PC-9 (cell line): ENCODE measurements at regions of chr19 and their contacts with region 1.

Region 1: GRCh38 chr19:41263850-41264580 is at the start of gene HNRNPUL1:
- DNase-seq: peak; percentile 99 to 100
- H3K4me3 ChIP-seq: peak within 1 kb of the TSS; percentile 85
- H3K27ac ChIP-seq: peak within 1 kb of the TSS; percentile 90
- H3K4me1 ChIP-seq: peaks cover 10% of the 10 kb centered on the region; the same call in 1 of the 2 replicates
- H3K27me3 ChIP-seq: no peaks in the 10 kb centered on the region
- CTCF ChIP-seq: no peak
- total RNA-seq, gene HNRNPUL1: 248 and 266 TPM in 2 replicates

Region 2: DNA sequence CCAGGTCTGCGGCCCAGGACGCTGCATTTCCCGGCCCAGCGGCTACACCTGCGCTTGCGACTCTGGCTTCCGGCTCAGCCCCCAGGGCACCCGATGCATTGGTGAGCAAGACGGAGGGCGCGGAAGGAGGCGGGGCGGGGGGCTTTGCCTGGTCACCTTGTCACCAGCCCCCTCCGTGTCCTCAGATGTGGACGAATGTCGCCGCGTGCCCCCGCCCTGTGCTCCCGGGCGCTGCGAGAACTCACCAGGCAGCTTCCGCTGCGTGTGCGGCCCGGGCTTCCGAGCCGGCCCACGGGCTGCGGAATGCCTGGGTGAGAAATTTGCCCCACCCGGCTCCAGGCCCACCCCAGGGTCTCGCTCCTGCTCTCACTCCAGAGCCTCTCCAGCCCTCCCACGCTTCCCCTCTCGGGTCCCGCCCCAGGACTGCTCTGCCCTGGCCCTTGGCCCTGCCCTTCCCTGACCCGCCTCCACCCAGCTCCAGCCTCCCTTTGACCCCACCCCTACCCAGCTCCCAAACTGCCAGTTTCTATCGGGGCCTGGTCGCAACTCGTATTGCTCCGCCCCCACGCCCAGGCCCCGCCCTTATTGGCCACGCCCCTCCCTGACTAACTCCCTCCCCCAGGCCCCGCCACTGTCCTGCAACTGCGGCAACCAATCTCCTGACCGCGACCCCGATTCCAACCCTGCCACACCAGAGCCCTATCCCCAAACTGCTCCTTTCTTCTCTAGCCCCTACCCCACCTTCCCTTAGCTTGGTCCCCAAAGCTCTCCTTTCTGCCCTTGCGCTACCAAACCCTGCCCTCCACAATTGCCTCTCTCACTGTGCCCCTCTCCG is 654.2 kb before region 1 on chr19:
- CTCF ChIA-PET with region 1: interaction called, 5 read pairs
- POLR2A ChIA-PET with region 1: interaction called, 11 read pairs
- intact Hi-C with region 1: no loop called
- DNase-seq: peak; percentile 77 to 95
- H3K4me3 ChIP-seq: peak overlapping the region; percentile 63
- H3K27ac ChIP-seq: no peak overlapping the region
- H3K4me1 ChIP-seq: peaks cover 18% of the 10 kb centered on the region
- H3K27me3 ChIP-seq: no peaks in the 10 kb centered on the region
- CTCF ChIP-seq: no peak

Region 3: GRCh38 chr19:40974633-40975037 is 289.4 kb before region 1 on chr19:
- CTCF ChIA-PET with region 1: no interaction called
- POLR2A ChIA-PET with region 1: no interaction called
- intact Hi-C with region 1: loop called (anchors 2 kb)
- DNase-seq: peak; percentile 42 to 63
- H3K4me3 ChIP-seq: no peak overlapping the region
- H3K27ac ChIP-seq: no peak overlapping the region
- H3K4me1 ChIP-seq: no peaks in the 10 kb centered on the region
- H3K27me3 ChIP-seq: peaks cover 7% of the 10 kb centered on the region; the same call in 1 of the 2 replicates
- CTCF ChIP-seq: peak; percentile 94

Region 4: DNA sequence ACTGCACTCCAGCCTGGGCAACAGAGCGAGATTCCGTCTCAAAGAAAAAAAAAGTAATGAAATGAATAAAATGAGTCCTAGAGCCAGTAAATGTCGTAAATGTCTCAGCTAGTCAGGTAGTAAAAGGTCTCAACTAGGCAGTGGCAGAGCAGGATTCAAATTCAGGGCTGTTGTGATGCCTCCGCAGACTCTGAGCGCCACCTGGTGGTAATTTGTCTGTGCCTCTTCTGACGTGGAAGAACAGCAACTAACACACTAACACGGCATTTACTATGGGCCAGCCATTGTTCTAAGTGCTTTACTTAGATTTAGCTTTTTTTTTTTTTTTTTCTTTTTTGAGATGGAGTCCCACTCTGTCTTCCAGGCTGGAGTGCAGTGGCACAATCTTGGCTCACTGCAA is 119.6 kb before region 1 on chr19:
- CTCF ChIA-PET with region 1: interaction called, 4 read pairs
- POLR2A ChIA-PET with region 1: no interaction called
- intact Hi-C with region 1: loop called (anchors 10 kb)
- DNase-seq: peak; percentile 64 to 75
- H3K4me3 ChIP-seq: no peak overlapping the region
- H3K27ac ChIP-seq: no peak overlapping the region
- H3K4me1 ChIP-seq: no peaks in the 10 kb centered on the region
- H3K27me3 ChIP-seq: no peaks in the 10 kb centered on the region
- CTCF ChIP-seq: peak; percentile 90

Region 5: GRCh38 chr19:41218615-41219507 is 45.2 kb before region 1 on chr19 and contains the start of gene AXL:
- CTCF ChIA-PET with region 1: no interaction called
- POLR2A ChIA-PET with region 1: interaction called, 10 read pairs
- intact Hi-C with region 1: loop called (anchors 1 kb)
- DNase-seq: peak in 1 of 2 experiments; percentile 87
- H3K4me3 ChIP-seq: peak within 1 kb of the TSS; percentile 68
- H3K27ac ChIP-seq: no peak within 1 kb of the TSS
- H3K4me1 ChIP-seq: peaks cover 25% of the 10 kb centered on the region
- H3K27me3 ChIP-seq: no peaks in the 10 kb centered on the region
- CTCF ChIP-seq: no peak
- total RNA-seq, gene AXL: 236 and 271 TPM in 2 replicates

Region 6: DNA sequence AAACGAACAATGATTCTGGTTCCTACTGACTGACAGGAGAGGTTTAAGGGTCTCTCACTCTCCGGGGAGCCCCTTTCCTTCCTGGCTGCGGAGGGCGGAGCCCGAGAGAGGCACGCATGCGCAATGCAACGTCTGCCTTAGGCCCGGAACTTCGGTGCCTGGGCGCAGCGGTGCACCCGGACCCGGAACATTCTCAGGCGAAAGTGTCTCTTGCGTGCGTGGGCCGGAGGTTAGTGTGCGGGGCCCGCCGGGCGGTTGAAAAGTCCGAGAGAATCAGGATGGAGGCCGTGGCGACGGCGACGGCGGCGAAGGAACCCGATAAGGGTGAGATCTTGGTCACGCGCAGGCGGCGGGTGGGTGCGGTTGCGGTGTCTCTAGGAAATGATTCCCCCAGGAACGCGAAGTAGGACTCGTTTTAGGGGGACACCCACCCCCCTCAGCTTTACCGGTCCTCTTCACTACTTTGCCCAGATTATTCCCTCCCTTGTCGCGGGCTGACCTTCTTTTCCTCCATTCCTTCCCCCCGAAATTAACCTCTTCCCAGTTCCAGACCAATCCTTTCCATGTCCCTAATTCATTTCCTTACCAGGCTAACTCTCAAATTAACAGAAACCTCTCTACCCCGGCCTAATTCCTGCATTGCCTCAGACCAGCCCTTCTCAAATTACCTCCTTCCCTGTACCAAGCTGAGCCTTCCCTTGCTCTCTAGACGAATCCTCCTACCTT is 46.2 kb after region 1 on chr19 and contains the start of gene CCDC97:
- CTCF ChIA-PET with region 1: no interaction called
- POLR2A ChIA-PET with region 1: no interaction called
- intact Hi-C with region 1: loop called (anchors 1 kb)
- DNase-seq: peak; percentile 67 to 84
- H3K4me3 ChIP-seq: peak within 1 kb of the TSS; percentile 88
- H3K27ac ChIP-seq: peak within 1 kb of the TSS; percentile 87
- H3K4me1 ChIP-seq: peaks cover 16% of the 10 kb centered on the region
- H3K27me3 ChIP-seq: no peaks in the 10 kb centered on the region
- CTCF ChIP-seq: no peak
- total RNA-seq, gene CCDC97: 24.1 and 26.4 TPM in 2 replicates

Region 7: DNA sequence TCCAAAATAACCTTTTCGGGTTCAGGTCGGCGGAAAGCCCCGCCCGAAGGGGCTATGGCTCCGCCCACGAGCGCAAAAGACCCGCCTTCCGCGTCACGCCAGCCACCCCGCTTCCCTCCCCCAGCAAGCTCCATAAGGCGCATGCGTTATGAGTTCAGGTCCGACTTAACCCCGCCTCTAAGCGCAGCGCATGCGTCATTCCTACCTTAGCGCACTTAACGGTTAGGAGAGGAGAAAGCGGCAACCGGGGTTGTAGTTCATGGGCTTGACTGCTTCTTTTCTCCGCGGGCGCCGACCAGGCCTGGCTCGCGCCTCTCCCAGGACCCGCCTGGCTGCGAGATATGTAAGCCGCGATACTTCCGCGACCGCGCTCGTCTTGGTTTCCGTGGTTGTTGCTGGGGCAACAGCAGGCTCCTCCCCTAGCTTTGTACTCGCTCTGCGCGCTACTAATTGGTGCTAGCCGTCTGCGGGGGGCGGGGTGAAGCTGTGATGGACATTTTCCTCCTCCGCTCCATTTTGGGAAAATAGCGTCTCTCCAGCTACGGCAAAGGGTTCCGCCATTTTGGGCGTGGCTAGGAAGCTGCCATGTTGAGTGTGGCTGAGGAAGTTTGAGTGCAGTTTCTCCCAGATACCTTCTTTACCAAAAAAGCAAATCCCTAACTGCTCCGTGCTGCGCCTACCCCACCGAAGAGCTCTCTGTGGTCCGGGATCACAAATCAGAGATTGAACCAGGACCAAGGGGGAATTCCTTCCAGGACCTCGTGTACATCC is 99.9 kb after region 1 on chr19 and contains the start of gene B9D2:
- CTCF ChIA-PET with region 1: no interaction called
- POLR2A ChIA-PET with region 1: interaction called, 16 read pairs
- intact Hi-C with region 1: no loop called
- DNase-seq: peak; percentile 93 to 97
- H3K4me3 ChIP-seq: peak within 1 kb of the TSS; percentile 78
- H3K27ac ChIP-seq: peak within 1 kb of the TSS; percentile 88
- H3K4me1 ChIP-seq: peaks cover 21% of the 10 kb centered on the region
- H3K27me3 ChIP-seq: no peaks in the 10 kb centered on the region
- CTCF ChIP-seq: no peak
- total RNA-seq, gene B9D2: 8.0 and 10.8 TPM in 2 replicates

Region 8: DNA sequence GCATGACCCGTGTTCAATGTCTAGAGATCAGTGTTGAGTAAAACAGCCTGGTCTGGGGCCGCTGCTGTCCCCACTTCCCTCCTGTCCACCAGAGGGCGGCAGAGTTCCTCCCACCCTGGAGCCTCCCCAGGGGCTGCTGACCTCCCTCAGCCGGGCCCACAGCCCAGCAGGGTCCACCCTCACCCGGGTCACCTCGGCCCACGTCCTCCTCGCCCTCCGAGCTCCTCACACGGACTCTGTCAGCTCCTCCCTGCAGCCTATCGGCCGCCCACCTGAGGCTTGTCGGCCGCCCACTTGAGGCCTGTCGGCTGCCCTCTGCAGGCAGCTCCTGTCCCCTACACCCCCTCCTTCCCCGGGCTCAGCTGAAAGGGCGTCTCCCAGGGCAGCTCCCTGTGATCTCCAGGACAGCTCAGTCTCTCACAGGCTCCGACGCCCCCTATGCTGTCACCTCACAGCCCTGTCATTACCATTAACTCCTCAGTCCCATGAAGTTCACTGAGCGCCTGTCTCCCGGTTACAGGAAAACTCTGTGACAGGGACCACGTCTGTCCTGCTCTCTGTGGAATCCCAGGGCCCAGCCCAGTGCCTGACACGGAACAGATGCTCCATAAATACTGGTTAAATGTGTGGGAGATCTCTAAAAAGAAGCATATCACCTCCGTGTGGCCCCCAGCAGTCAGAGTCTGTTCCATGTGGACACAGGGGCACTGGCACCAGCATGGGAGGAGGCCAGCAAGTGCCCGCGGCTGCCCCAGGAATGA is 442.9 kb after region 1 on chr19:
- CTCF ChIA-PET with region 1: no interaction called
- POLR2A ChIA-PET with region 1: no interaction called
- intact Hi-C with region 1: no loop called
- DNase-seq: peak; percentile 69 to 81
- H3K4me3 ChIP-seq: peak overlapping the region; percentile 60; the same call in 1 of the 2 replicates
- H3K27ac ChIP-seq: no peak overlapping the region
- H3K4me1 ChIP-seq: peaks cover 18% of the 10 kb centered on the region
- H3K27me3 ChIP-seq: no peaks in the 10 kb centered on the region
- CTCF ChIP-seq: peak; percentile 99